ENCODE measurements at regions of chr12 and their contacts with region 1.

Region 1: DNA sequence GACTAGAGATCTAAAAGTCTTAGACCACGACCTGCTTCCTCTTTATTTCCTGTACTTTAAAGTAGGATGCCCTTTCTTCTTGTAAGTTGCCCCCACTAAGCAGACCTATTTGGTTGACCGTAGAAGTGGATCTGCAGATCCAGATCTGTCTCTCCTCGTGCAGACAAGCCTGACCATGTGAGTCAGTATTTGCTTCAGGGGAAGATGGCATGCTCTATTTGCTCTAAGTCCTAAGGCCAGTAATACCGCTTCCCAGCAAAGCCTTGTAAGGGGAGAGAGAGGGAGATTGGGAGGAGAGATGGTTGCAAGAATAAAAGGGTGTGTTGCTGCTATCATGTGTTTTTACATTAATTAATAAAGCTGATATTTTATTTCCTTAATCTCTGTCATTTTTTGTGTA is 46.8 kb downstream of the KCNC2 start:
- DNase-seq: no peak
- ATAC-seq: no peak
- H3K4me3 ChIP-seq: no peak overlapping the region
- H3K27ac ChIP-seq: no peak overlapping the region
- H3K4me1 ChIP-seq: no peaks in the 10 kb centered on the region
- H3K27me3 ChIP-seq: no peaks in the 10 kb centered on the region
- CTCF ChIP-seq: no peak
- POLR2A ChIP-seq: no peak
- RAD21 ChIP-seq: no peak

Region 2: DNA sequence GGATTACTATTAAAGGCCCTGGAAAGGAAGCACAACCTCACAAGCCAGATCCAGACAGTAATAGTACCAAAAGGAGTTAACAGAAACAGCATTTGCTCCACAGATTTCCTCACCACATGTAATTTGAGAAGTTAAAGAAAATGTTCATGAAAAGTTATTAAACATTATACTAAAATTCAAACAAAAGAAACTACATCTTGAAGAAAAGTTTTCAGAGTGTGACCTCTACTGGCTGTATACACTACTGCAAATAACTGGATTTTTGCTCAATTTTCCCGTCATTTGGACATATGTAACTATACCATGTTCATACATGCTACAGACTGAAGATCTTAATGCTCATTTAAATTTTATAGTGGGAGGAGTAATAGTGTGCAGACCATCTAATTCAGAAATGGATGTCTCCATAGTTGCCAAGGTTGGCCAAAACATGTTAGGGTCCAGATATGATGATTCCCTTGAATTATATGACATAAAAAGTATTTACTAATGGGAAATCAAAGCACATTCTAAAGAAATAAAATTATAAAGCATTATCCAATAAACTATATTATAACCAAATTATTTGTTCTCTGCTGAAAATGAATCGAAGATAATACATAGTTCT is 342.9 kb after region 1 on chr12:
- CTCF ChIA-PET with region 1: no interaction called
- POLR2A ChIA-PET with region 1: no interaction called
- RAD21 ChIA-PET with region 1: no interaction called
- intact Hi-C with region 1: loop called (anchors 10 kb)
- DNase-seq: no peak
- ATAC-seq: peak; percentile 59; the same call in 1 of the 2 replicates
- H3K4me3 ChIP-seq: no peak overlapping the region
- H3K27ac ChIP-seq: no peak overlapping the region
- H3K4me1 ChIP-seq: peaks cover 13 to 22% of the 10 kb centered on the region in 2 experiments; a peak in 2 of 4 replicates
- H3K27me3 ChIP-seq: no peaks in the 10 kb centered on the region
- CTCF ChIP-seq: peak; percentile 36 to 69 (median 51); a peak in 4 of 6 replicates
- POLR2A ChIP-seq: no peak
- RAD21 ChIP-seq: peak; percentile 63

Region 3: GRCh38 chr12:76250256-76250655 is 1087.4 kb after region 1 on chr12:
- CTCF ChIA-PET with region 1: no interaction called
- POLR2A ChIA-PET with region 1: no interaction called
- RAD21 ChIA-PET with region 1: no interaction called
- intact Hi-C with region 1: no loop called
- DNase-seq: no peak
- ATAC-seq: no peak
- H3K4me3 ChIP-seq: no peak overlapping the region
- H3K27ac ChIP-seq: no peak overlapping the region
- H3K4me1 ChIP-seq: no peaks in the 10 kb centered on the region
- H3K27me3 ChIP-seq: no peaks in the 10 kb centered on the region
- CTCF ChIP-seq: no peak
- POLR2A ChIP-seq: no peak
- RAD21 ChIP-seq: no peak